Common myeloid progenitor, CD34-positive (primary cell): ENCODE measurements at regions of chr15 and their contacts with region 1.

Region 1: GRCh38 chr15:74322181-74323076 is 45.0 kb downstream of the CYP11A1 start:
- DNase-seq: peak; percentile 50 to 78 (median 71)
- H3K4me3 ChIP-seq: no peak overlapping the region
- H3K27ac ChIP-seq: no peak overlapping the region
- H3K4me1 ChIP-seq: peaks cover 0 to 53% (median 31%) of the 10 kb centered on the region in 4 experiments
- H3K27me3 ChIP-seq: no peaks in the 10 kb centered on the region

Region 2: GRCh38 chr15:74053941-74054529 is 268.4 kb before region 1 on chr15:
- CTCF ChIA-PET with region 1: interaction called, 30 read pairs
- POLR2A ChIA-PET with region 1: no interaction called
- DNase-seq: peak; percentile 67 to 81 (median 81)
- H3K4me3 ChIP-seq: peak overlapping the region in 3 of 7 experiments; percentile 19 to 62 (median 36)
- H3K27ac ChIP-seq: no peak overlapping the region
- H3K4me1 ChIP-seq: peaks cover 0 to 33% (median 16%) of the 10 kb centered on the region in 4 experiments
- H3K27me3 ChIP-seq: no peaks in the 10 kb centered on the region

Region 3: DNA sequence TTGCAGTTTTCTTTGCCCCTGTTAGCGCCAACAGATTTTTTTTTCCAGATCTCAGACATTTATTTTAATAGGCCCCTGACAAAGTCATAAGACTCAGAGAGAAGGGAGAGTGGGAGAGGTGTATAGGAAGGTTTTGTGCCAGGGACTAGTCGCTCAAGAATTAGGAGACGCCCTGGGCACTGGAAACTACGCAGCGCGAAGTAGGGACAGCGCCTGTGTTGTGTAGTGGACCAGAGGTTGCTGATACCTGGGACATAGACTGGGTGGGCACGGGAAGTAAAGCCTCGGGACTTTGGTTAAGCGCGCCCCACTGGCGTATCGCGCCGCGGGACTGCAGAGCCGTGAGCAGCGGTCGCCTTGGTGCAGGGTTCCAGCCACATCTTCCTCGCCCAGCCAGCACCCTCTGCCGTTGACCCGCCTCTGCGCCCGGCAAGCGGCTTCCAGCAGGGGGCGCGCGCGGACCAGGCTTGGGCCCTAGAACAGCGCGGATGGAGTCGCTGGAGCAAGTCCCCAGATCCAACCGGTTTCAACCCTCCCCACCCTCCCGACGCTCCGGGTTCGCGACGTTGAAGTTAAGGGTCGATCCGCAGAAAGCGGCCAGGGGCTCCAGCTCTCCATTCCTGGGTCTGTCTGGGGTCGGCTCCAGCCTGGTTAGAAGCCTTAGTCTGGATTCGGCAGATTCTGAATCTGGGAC is 195.0 kb before region 1 on chr15:
- CTCF ChIA-PET with region 1: interaction called, 27 read pairs
- POLR2A ChIA-PET with region 1: no interaction called
- DNase-seq: peak; percentile 82 to 87 (median 87)
- H3K4me3 ChIP-seq: peak overlapping the region in 3 of 7 experiments; percentile 32 to 59 (median 52)
- H3K27ac ChIP-seq: no peak overlapping the region
- H3K4me1 ChIP-seq: peaks cover 6 to 44% (median 35%) of the 10 kb centered on the region in 4 experiments
- H3K27me3 ChIP-seq: peaks cover 0 to 68% (median 35%) of the 10 kb centered on the region in 5 experiments

Region 4: DNA sequence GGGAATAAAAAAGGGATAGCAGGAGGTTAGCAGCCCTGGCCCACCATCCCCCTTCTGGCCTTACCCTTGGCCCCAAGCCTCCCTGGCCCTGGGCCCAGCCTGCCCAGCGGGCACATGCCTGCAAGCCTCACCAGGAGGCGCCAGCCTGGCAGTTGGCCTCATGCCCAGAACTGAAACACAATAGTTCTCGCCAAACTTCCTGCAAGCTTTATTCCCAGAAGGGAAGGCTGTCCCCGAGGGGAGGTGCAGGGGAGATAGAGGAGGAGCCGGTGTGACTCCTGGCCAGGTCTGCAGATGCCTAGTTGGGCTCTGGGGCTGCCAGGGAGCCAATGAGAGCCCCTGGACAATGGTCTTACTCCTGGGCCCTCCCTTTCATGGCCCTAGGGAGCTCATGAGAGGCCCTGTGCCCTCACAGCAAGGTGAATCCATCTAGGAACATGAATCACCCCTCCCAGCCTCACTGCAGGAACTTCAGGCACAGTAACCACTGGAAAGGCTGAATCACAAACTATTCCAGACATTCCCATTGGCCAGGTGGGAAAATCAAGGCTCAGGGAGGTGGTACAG is 82.3 kb before region 1 on chr15:
- CTCF ChIA-PET with region 1: interaction called, 10 read pairs
- POLR2A ChIA-PET with region 1: no interaction called
- DNase-seq: peak; percentile 39 to 53 (median 51)
- H3K4me3 ChIP-seq: no peak overlapping the region
- H3K27ac ChIP-seq: no peak overlapping the region
- H3K4me1 ChIP-seq: peaks cover 0 to 18% (median 15%) of the 10 kb centered on the region in 4 experiments
- H3K27me3 ChIP-seq: peaks cover 0 to 10% (median 4%) of the 10 kb centered on the region in 5 experiments

Region 5: GRCh38 chr15:74302821-74303359 is 19.5 kb before region 1 on chr15:
- CTCF ChIA-PET with region 1: interaction called, 44 read pairs
- POLR2A ChIA-PET with region 1: no interaction called
- DNase-seq: peak; percentile 31 to 54 (median 47)
- H3K4me3 ChIP-seq: no peak overlapping the region
- H3K27ac ChIP-seq: no peak overlapping the region
- H3K4me1 ChIP-seq: peaks cover 0 to 3% (median 0%) of the 10 kb centered on the region in 4 experiments
- H3K27me3 ChIP-seq: peaks cover 0 to 63% (median 39%) of the 10 kb centered on the region in 5 experiments

Region 6: GRCh38 chr15:74307827-74308644 is 14.4 kb before region 1 on chr15:
- CTCF ChIA-PET with region 1: interaction called, 44 read pairs
- POLR2A ChIA-PET with region 1: no interaction called
- DNase-seq: peak; percentile 57 to 72 (median 59)
- H3K4me3 ChIP-seq: no peak overlapping the region
- H3K27ac ChIP-seq: no peak overlapping the region
- H3K4me1 ChIP-seq: peaks cover 0 to 19% (median 0%) of the 10 kb centered on the region in 4 experiments
- H3K27me3 ChIP-seq: peaks cover 0 to 30% (median 17%) of the 10 kb centered on the region in 5 experiments

Region 7: DNA sequence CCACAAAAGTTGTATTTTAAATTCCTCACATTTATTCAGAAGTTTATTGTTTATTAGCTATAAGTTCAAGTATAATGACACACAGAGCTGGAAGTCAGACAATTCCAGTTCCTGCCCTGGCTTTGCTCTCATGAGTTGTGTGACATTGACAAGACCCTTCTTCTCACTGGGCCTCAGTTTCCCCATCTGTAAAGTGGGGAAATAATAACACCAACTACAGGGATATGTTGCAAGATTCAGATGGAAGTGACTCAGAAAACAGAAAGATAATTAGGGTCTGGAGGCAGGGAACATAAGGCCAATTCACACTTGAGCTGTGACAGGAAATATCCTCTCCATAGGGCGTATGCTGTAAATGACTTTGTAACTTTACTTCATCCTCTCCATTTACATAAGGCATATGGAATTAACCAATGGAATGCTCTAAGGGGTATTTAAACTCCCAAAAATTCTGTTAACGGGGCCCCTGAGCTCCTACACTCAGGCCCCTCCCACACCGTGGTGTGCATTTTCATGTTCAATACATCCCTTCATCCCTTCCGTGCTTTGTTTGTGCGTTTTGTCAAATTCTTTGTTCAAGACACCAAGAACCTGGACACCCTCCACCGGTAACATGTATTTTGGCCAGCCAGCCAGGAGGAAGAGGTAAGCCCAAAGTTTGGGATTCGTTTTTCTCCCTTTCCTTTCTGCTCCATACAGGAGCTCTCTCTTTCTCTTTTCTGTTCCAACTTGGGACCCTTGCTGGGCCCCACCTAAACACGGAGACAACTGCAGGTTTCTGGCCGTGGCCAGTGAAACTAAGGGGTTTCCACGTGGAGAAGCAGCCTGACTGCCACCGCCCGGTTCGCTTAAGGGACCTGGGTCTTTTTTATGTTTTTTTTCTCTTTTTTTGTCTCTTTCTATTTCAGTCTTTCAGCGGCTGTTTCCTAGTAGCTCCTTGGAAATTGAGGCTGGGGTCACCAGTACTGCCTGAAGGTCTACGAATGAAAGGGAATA is 28.2 kb after region 1 on chr15:
- CTCF ChIA-PET with region 1: no interaction called
- POLR2A ChIA-PET with region 1: no interaction called
- DNase-seq: no peak
- H3K4me3 ChIP-seq: no peak overlapping the region
- H3K27ac ChIP-seq: no peak overlapping the region
- H3K4me1 ChIP-seq: no peaks in the 10 kb centered on the region
- H3K27me3 ChIP-seq: peaks cover 0 to 2% (median 0%) of the 10 kb centered on the region in 5 experiments

Region 8: DNA sequence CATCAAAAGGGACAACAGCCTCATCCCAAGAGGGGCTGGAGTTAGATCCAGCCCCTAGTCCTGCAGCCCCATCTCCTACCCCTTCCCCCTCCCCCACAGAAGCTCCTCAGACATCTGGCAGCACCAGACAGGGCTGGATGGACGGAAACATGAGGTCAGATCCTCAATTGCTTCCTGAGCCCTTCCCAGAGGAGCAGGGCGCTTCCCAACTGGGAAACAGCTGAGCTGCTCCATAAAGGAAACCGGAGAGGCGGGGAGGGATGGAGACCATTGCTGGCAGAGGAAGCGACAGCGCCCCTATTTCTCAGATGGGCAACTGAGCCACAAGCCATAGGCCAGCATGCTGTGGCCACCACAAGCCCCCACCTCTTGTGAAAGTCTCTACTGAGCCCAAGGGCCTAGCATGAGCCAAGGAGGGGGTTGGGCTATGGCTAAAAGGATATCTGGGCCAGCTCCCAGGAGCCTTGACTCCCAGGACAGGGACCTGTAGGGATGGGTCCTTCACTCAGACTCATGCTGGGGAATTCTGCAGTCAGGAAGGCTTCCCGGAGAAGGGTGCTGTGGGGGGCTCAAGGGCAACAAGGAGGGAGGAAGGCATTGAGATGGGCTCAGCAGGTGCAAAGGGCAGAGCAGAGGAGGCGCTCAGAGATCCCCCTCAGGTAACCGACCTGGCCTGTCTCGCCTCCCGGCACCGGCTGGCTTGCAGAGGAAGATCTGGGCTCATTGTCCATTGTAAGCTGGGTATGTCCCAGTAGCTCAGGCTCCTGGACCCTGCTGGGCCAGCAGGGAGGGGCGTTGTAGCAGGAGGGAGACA is 63.5 kb after region 1 on chr15:
- CTCF ChIA-PET with region 1: no interaction called
- POLR2A ChIA-PET with region 1: no interaction called
- DNase-seq: no peak
- H3K4me3 ChIP-seq: no peak overlapping the region
- H3K27ac ChIP-seq: peak overlapping the region in 1 of 2 experiments; percentile 40
- H3K4me1 ChIP-seq: peaks cover 0 to 83% (median 75%) of the 10 kb centered on the region in 4 experiments
- H3K27me3 ChIP-seq: no peaks in the 10 kb centered on the region

Region 9: DNA sequence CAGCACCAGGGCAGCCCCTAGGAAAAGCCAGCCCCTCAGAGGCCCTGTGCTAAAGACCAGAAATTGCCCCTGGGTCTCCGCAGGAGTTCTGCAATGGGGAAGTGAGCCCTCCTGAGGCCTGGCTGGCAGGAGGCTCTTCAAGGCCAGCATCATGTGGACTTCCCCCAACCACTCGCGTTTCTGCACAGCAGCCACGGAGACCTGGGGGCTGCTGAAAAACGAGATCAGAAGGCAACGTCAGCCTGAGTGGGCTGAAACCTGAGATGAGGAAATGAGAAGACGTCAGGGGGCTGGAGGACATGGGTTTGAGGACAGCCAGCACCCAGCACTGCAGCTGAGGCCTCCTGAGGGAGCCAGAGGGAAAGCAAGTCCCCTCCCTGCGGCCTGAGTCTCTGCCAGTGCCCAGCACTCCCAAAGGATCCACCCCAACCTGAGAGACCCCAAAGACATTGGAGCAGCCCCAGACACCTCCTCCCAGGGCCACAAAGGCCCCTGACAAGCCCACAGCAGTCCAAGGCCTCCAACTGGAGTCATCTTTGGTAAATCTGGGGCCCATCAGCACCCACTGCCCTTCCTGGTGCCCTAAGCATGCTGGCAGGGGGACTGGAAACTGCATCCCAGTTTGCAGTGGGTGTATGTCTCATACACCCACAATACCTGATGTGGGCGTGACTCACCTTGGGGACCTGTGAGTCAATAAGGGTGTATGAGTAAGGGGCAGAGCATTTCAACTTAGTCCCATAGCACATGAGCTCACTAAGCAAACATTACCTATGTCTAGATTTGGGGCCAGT is 74.2 kb after region 1 on chr15:
- CTCF ChIA-PET with region 1: no interaction called
- POLR2A ChIA-PET with region 1: no interaction called
- DNase-seq: peak; percentile 73 to 90 (median 87)
- H3K4me3 ChIP-seq: no peak overlapping the region
- H3K27ac ChIP-seq: no peak overlapping the region
- H3K4me1 ChIP-seq: peaks cover 6 to 81% (median 74%) of the 10 kb centered on the region in 4 experiments
- H3K27me3 ChIP-seq: no peaks in the 10 kb centered on the region

Region 10: GRCh38 chr15:74461847-74462511 is 139.6 kb after region 1 on chr15:
- CTCF ChIA-PET with region 1: no interaction called
- POLR2A ChIA-PET with region 1: no interaction called
- DNase-seq: no peak
- H3K4me3 ChIP-seq: peak overlapping the region in 6 of 7 experiments; percentile 93 to 100 (median 96)
- H3K27ac ChIP-seq: peak overlapping the region; percentile 69 to 93
- H3K4me1 ChIP-seq: peaks cover 11 to 29% (median 18%) of the 10 kb centered on the region in 4 experiments
- H3K27me3 ChIP-seq: no peaks in the 10 kb centered on the region